Dorsolateral prefrontal cortex (tissue), 120 donors: ENCODE measurements at regions of chr16 and their contacts with region 1.

Region 1: DNA sequence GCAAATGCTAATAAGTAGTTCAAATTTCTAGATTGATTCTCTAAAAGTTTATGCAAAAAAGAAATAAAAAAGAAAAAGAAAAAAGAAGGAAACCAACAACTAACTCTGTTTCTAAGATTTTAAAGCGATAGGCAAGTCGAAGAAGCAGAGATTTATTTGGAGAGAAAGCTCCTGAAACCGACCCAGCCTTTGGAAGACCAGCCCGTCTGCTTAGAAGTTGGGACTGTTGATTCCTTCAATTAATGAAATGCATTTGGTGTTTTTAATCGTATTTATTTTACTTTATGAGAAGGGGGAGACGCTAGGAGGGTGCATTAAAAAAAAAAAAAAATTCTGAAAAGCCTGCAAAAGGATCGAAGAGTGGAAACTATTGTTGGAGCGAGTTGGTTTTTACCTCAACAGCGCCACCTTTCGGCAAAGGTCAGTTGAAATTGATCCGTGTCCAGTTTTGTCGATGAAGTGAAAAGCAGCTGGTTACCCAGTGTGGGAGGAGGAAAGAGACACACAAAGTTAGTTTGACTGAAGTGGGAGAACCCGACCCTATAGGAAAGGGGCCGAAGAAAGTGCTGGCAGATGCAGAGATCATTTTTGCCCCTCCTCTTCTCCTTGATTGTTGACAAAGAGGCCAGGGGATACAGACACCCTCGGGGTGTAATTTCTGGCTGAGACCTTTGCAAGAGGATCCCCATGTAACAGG is 1.5 kb upstream of the MAF start:
- DNase-seq: peak in 9 of 10 donors; percentile 53 to 86 (median 77)
- H3K4me3 ChIP-seq: peak overlapping the region; percentile 51 to 85 (median 73)
- H3K27ac ChIP-seq: peak overlapping the region in 54 of 59 donors; percentile 5 to 98 (median 93)
- H3K27me3 ChIP-seq: peaks cover 0 to 16% (median 0%) of the 10 kb centered on the region in 45 donors
- CTCF ChIP-seq: peak; percentile 74 to 96 (median 86)

Region 2: GRCh38 chr16:78503602-78504001 is 1098.5 kb before region 1 on chr16:
- intact Hi-C with region 1: loop called (anchors 5 kb)
- DNase-seq: peak in 4 of 10 donors; percentile 36 to 84 (median 60)
- H3K4me3 ChIP-seq: no peak overlapping the region
- H3K27ac ChIP-seq: peak overlapping the region in 4 of 59 donors; percentile 11 to 61 (median 40)
- H3K27me3 ChIP-seq: no peaks in the 10 kb centered on the region
- CTCF ChIP-seq: peak; percentile 86 to 98 (median 94)

Region 3: DNA sequence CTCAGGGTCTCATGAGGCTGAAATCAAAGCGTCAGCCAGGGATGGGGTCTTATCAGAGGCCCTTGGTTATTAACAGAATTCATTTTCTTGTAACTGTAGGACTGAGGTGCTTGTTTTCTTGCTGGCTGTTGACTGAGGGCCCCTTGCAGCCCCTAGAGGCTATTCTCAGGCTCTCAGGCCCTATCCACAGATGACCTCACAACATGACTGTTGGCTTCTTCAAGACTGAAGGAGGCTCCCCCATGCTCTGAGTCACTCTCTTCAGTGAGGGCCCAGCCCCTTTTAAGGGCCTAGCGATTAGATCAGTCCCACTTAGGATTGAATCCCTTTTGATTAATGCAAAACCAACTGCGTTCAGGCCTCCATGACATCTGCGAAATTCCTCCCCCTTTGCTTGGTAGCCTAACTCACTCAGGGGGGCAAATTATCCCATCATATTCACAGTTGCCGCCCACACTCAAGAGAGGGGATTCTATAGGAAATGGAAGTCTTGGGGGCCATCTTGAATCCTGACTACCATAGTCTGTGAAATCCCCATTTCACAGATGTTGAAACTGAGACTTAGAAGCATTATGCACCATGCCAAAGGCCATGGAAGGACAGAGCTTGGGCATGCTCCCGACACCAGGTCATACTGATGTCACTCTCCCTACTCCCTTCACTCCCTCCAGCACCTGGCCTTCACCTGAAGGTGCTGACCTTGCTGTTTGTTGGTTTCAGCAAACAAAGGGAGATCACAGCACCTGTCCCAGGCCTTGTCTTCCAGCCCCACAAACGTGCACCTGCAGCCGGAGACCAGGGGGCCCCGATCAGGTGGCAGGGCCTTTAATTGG is 593.8 kb before region 1 on chr16:
- intact Hi-C with region 1: loop called in 1 of 2 experiments (anchors 10 kb)
- DNase-seq: no peak
- H3K4me3 ChIP-seq: no peak overlapping the region
- H3K27ac ChIP-seq: no peak overlapping the region
- H3K27me3 ChIP-seq: no peaks in the 10 kb centered on the region
- CTCF ChIP-seq: no peak

Region 4: GRCh38 chr16:79767421-79768275 is 165.6 kb after region 1 on chr16:
- intact Hi-C with region 1: loop called in 1 of 2 experiments (anchors 10 kb)
- DNase-seq: peak in 5 of 10 donors; percentile 15 to 56 (median 43)
- H3K4me3 ChIP-seq: peak overlapping the region in 56 of 59 donors; percentile 4 to 62 (median 38)
- H3K27ac ChIP-seq: peak overlapping the region in 57 of 59 donors; percentile 0 to 88 (median 75)
- H3K27me3 ChIP-seq: no peaks in the 10 kb centered on the region
- CTCF ChIP-seq: peak in 46 of 56 donors; percentile 8 to 60 (median 36)